Sciatic nerve (tissue), 2 donors: ENCODE measurements at regions of chr6 and their contacts with region 1.

Region 1: GRCh38 chr6:133991096-133991593 is 38.1 kb downstream of the TBPL1 start:
- DNase-seq: no peak
- ATAC-seq: peak; percentile 62

Region 2: DNA sequence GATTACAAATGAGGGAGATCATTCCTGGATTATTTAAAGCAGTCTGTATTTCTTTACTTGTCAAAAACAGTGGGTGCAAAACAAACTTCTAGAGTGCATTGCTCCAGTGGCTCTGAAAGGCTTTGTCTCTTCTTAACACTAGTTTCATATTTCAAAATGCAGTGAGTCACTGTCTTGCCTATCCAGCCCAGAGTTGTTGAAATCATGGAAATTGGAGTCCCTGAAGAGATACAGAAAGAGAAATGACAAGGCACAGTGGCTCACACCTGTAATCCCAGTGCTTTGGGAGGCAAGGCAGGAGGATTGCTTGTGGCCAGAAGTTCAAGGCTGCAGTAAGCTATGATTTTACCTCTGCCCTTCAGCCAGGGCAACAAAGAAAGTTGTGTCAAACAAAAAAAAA is 49.9 kb after region 1 on chr6:
- intact Hi-C with region 1: loop called (anchors 10 kb)
- DNase-seq: no peak
- ATAC-seq: no peak